IMR-90 (cell line): ENCODE measurements at regions of chr11 and their contacts with region 1.

Region 1: DNA sequence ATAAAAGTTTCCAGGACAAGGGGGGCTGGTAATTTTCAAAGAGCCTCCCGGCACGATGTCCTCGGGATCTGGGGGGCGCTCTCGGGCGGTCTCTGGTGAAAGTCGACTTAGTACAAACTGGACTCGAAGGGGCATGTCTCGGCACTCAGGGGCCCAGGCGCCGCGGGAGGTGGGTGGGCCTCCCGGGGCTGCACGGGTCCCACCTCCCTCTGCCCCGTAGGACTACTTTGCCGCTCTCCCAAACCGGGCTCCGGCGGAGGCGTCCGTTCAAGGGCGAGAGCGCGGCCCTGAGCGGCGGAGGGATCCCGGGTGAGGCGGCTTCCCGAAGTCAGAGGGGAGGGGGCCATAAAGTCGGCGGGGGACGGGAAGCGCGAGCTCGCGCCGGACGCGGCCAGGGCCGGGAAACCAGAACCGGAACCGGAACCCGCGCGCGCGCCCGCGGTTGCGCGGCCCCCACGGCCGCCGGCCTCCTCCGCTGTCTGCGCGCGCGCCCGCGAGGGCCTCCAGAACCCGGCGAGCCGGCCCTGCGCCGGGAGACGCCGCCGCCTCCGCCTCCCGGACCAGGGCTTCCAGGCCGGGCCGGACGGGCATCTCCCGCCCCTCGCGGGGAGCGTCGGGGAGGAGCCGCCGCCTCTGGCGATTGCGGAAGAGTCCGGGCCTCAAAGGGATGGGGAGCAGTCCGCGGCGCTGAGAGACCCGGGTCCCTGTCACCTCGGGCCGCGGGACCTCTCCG is at the start of gene ARHGEF12:
- DNase-seq: peak; percentile 97
- ATAC-seq: peak; percentile 61
- H3K4me3 ChIP-seq: peak within 1 kb of the TSS; percentile 93
- H3K27ac ChIP-seq: peak within 1 kb of the TSS; percentile 92
- H3K4me1 ChIP-seq: peaks cover 6% of the 10 kb centered on the region
- H3K27me3 ChIP-seq: no peaks in the 10 kb centered on the region
- CTCF ChIP-seq: peak; percentile 31; the same call in 1 of the 2 replicates
- POLR2A ChIP-seq: peak; percentile 73
- RAD21 ChIP-seq: no peak
- total RNA-seq, gene ARHGEF12: 115 and 131 TPM in 2 replicates

Region 2: GRCh38 chr11:119797123-119797611 is 538.9 kb before region 1 on chr11:
- CTCF ChIA-PET with region 1: no interaction called
- POLR2A ChIA-PET with region 1: no interaction called
- dilution Hi-C with region 1: no loop called
- in situ Hi-C with region 1: no loop called
- intact Hi-C with region 1: no loop called
- DNase-seq: no peak
- ATAC-seq: no peak
- H3K4me3 ChIP-seq: no peak overlapping the region
- H3K27ac ChIP-seq: no peak overlapping the region
- H3K4me1 ChIP-seq: no peaks in the 10 kb centered on the region
- H3K27me3 ChIP-seq: peaks cover 23% of the 10 kb centered on the region
- CTCF ChIP-seq: no peak
- POLR2A ChIP-seq: no peak
- RAD21 ChIP-seq: no peak

Region 3: DNA sequence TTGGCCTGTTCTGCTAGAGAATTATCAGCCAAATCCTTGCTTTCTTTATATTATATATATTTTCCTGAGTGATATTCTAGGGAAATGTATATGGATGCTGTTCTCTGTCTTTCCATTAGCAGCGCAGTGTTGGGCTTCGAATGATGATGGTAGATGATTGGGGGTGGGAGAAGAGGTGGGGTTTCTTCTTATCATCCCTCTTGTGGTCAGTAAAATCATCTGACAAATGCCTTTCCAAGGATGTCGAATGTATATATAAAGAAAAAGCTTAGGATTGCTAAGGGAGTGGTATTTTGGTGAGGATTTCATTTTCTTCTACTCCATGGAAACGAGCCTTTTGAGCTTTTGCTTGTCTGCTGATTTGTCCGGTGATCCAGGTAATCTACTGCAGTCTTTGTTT is 49.0 kb after region 1 on chr11:
- CTCF ChIA-PET with region 1: interaction called, 3 read pairs
- POLR2A ChIA-PET with region 1: no interaction called
- dilution Hi-C with region 1: no loop called
- in situ Hi-C with region 1: no loop called
- intact Hi-C with region 1: loop called (anchors 5 kb)
- DNase-seq: peak; percentile 80
- ATAC-seq: peak; percentile 70
- H3K4me3 ChIP-seq: no peak overlapping the region
- H3K27ac ChIP-seq: no peak overlapping the region; the same call in 1 of the 2 replicates
- H3K4me1 ChIP-seq: peaks cover 15% of the 10 kb centered on the region
- H3K27me3 ChIP-seq: no peaks in the 10 kb centered on the region
- CTCF ChIP-seq: no peak; the same call in 1 of the 2 replicates
- POLR2A ChIP-seq: no peak
- RAD21 ChIP-seq: no peak

Region 4: GRCh38 chr11:120432056-120433018 is 96.3 kb after region 1 on chr11:
- CTCF ChIA-PET with region 1: interaction called, 8 read pairs
- POLR2A ChIA-PET with region 1: interaction called, 4 read pairs
- dilution Hi-C with region 1: no loop called
- in situ Hi-C with region 1: loop called (anchors 25 kb)
- intact Hi-C with region 1: loop called (anchors 1 kb)
- DNase-seq: peak; percentile 100
- ATAC-seq: peak; percentile 94
- H3K4me3 ChIP-seq: no peak overlapping the region
- H3K27ac ChIP-seq: peak overlapping the region; percentile 91
- H3K4me1 ChIP-seq: peaks cover 7% of the 10 kb centered on the region
- H3K27me3 ChIP-seq: no peaks in the 10 kb centered on the region
- CTCF ChIP-seq: no peak
- POLR2A ChIP-seq: peak; percentile 31; the same call in 1 of the 2 replicates
- RAD21 ChIP-seq: peak; percentile 29; the same call in 1 of the 2 replicates

Region 5: DNA sequence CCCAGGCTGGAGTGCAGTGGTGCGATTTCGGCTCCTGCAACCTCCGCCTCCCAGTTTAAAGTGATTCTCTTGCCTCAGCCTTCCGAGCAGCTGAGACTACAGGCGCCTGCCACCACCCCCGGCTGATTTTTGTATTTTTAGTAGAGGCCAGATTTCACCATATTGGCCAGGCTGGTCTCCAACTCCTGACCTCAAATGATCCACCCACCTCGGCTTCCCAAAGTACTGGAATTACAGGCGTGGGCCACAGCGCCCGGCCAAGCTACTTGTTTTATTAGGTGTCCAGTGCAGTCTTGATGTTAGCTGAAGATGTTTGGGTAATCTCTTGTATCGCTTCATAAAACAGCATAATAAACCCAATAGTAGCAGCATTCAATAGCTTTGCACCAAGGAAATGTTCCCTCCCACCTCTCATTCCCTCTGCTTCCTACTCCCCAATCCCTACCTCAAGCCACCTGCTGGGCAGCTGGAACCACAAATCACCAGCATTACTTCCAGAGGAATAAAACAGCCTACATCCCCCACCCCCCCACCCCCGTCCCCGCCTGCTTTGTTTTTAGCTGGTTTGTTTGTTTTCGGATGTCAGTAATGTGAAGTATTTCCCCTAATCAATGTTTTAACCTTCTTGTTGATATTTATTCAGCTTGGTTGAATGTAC is 164.5 kb after region 1 on chr11:
- CTCF ChIA-PET with region 1: interaction called, 3 read pairs
- POLR2A ChIA-PET with region 1: no interaction called
- dilution Hi-C with region 1: no loop called
- in situ Hi-C with region 1: no loop called
- intact Hi-C with region 1: loop called (anchors 5 kb)
- DNase-seq: no peak
- ATAC-seq: peak; percentile 10; the same call in 1 of the 2 replicates
- H3K4me3 ChIP-seq: no peak overlapping the region
- H3K27ac ChIP-seq: no peak overlapping the region
- H3K4me1 ChIP-seq: no peaks in the 10 kb centered on the region
- H3K27me3 ChIP-seq: no peaks in the 10 kb centered on the region
- CTCF ChIP-seq: no peak
- POLR2A ChIP-seq: no peak
- RAD21 ChIP-seq: no peak

Region 6: GRCh38 chr11:120682866-120683265 is 346.8 kb after region 1 on chr11:
- CTCF ChIA-PET with region 1: no interaction called
- POLR2A ChIA-PET with region 1: no interaction called
- dilution Hi-C with region 1: no loop called
- in situ Hi-C with region 1: no loop called
- intact Hi-C with region 1: loop called (anchors 10 kb)
- DNase-seq: peak; percentile 82
- ATAC-seq: peak; percentile 85
- H3K4me3 ChIP-seq: no peak overlapping the region
- H3K27ac ChIP-seq: no peak overlapping the region
- H3K4me1 ChIP-seq: peaks cover 3% of the 10 kb centered on the region; the same call in 1 of the 2 replicates
- H3K27me3 ChIP-seq: peaks cover 10% of the 10 kb centered on the region
- CTCF ChIP-seq: no peak
- POLR2A ChIP-seq: no peak
- RAD21 ChIP-seq: no peak

Region 7: DNA sequence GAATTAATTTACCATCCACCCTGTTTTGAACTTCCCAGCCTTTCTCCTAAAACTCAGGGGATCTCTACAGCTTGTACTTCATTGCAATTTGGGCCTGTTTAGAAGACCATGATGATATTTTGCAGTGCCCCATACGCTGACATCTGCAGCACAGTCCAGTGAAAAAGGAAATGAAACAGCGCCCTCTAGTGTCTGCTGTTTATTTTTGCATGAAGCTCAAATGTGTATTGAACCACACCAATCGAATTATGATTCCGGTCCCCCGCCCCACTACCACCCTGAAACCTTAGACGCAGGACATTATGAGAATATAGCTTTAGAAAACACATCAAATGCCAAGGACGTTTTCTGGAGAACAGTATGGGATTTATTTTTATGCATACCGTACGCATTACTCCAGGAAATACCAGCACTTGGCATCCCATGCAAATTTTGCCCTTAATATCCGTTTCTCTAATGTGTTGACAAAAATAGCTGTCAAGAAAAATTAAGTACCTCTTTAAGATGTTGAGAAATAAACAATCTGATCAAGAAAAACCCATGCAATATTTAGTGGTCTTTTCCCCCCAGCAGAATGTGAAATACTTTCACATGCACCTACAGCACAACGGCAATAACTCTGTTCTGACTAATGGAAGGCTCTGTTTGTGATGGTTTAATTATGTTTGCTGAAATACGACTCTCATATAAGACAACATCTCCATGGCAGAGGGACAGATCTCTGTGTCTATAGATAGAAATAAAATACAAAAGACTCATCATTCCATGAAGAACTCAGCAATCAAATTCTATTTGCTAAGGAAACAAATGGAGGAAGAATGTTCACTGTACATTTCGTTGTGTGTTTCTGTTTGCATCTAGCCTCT is 858.9 kb after region 1 on chr11:
- CTCF ChIA-PET with region 1: no interaction called
- POLR2A ChIA-PET with region 1: no interaction called
- dilution Hi-C with region 1: no loop called
- in situ Hi-C with region 1: no loop called
- intact Hi-C with region 1: loop called (anchors 10 kb)
- DNase-seq: peak; percentile 64
- ATAC-seq: peak; percentile 98
- H3K4me3 ChIP-seq: no peak overlapping the region
- H3K27ac ChIP-seq: no peak overlapping the region
- H3K4me1 ChIP-seq: no peaks in the 10 kb centered on the region
- H3K27me3 ChIP-seq: peaks cover 15% of the 10 kb centered on the region
- CTCF ChIP-seq: peak; percentile 74
- POLR2A ChIP-seq: no peak
- RAD21 ChIP-seq: peak; percentile 72